Naive thymus-derived CD4-positive, alpha-beta T cell (primary cell): ENCODE measurements at regions of chr19 and their contacts with region 1.

Region 1: DNA sequence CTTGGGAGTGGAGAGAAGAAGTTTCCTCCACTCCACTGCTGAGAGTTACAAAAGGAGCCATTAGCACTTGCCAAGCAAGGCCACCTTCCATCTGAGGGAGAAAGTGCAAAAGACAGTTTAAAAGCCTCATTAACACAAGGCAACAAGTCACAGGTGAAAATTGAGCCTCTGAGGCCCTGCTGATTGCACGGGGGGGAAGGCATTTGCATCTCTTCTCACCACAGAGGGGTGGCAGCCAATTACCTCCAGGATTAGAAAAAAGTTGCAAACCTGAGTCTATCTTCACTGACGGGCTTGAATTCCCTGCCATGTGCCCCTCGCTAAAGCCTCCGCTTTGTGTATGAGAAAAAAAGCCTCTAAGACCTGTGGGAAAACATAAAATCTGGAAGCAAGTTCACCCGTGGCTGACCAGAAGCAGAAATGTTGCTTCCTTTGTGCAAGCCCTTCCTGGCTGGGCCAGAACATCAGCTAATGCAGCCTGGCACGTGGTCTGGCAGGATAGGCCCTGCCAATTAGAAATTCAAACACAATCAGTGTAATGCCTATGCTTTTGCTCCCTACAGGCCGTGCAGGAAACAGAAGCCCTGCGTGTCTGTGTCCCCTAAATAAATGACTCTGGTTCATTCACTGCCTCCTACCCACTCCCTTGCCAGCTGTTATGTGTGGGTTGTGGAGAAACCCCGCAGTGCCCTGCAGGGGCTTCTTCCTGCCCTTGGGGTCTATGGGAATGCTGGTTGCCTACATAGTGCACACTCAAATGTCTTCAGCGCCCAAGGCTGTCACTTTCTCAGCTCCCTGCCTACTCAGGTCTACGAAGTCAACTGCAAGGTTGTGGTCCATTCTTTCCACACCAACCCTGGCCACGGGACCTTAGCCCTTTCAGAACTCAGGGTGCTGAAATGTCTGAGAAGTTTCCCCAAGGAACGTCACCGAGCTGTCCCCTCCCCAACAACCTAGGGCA is 150.2 kb downstream of the UQCRFS1 start:
- DNase-seq: no peak
- ATAC-seq: no peak
- H3K4me3 ChIP-seq: no peak overlapping the region
- H3K4me3 Mint-ChIP-seq: no peak overlapping the region
- H3K27ac ChIP-seq: no peak overlapping the region
- H3K27ac Mint-ChIP-seq: no peak overlapping the region
- H3K4me1 ChIP-seq: no peaks in the 10 kb centered on the region
- H3K4me1 Mint-ChIP-seq: no peaks in the 10 kb centered on the region
- H3K27me3 ChIP-seq: no peaks in the 10 kb centered on the region
- H3K27me3 Mint-ChIP-seq: peaks cover 0 to 58% (median 15%) of the 10 kb centered on the region in 5 donors

Region 2: GRCh38 chr19:28847468-28847867 is 215.3 kb before region 1 on chr19:
- CTCF ChIA-PET with region 1: no interaction called
- POLR2A ChIA-PET with region 1: no interaction called
- intact Hi-C with region 1: no loop called
- DNase-seq: no peak
- ATAC-seq: no peak
- H3K4me3 ChIP-seq: no peak overlapping the region
- H3K4me3 Mint-ChIP-seq: no peak overlapping the region
- H3K27ac ChIP-seq: no peak overlapping the region
- H3K27ac Mint-ChIP-seq: no peak overlapping the region
- H3K4me1 ChIP-seq: no peaks in the 10 kb centered on the region
- H3K4me1 Mint-ChIP-seq: peaks cover 0 to 2% (median 0%) of the 10 kb centered on the region in 7 donors
- H3K27me3 ChIP-seq: no peaks in the 10 kb centered on the region
- H3K27me3 Mint-ChIP-seq: peaks cover 0 to 17% (median 14%) of the 10 kb centered on the region in 5 donors

Region 3: DNA sequence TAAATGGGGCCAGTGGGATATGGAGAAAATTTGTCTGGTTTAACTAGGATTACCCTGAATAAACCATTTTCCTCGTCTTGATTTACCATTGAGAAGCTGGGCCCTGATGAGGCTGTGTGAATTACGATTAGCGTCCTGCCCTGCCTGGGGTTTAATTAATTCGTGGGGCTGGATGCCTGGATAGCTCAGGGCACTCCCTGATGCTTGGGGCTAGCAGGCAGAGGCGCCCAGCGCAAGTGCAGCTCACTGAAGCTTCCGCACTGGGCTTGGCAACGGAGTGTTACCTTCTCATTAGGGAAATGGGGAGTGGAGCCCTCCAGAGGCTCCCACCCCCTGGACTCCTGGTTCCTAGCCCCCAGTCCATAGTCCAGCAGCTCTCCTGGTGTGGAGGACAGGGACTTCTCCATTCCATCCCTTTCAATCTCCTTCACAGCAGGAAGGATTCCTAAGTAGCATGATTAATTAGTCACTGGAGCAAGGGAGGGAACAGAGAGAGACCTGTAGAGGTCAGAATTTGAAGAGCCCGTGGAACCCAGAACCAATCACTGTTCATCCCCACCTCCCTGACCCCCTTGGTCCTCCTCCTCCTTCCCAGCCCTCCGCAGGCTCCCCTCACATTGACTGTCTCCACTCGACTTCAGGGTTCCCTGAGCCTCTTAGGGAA is 43.0 kb after region 1 on chr19:
- CTCF ChIA-PET with region 1: no interaction called
- POLR2A ChIA-PET with region 1: no interaction called
- intact Hi-C with region 1: loop called in 1 of 2 experiments (anchors 2 kb)
- DNase-seq: no peak
- ATAC-seq: no peak
- H3K4me3 ChIP-seq: no peak overlapping the region
- H3K4me3 Mint-ChIP-seq: no peak overlapping the region
- H3K27ac ChIP-seq: no peak overlapping the region
- H3K27ac Mint-ChIP-seq: no peak overlapping the region
- H3K4me1 ChIP-seq: no peaks in the 10 kb centered on the region
- H3K4me1 Mint-ChIP-seq: no peaks in the 10 kb centered on the region
- H3K27me3 ChIP-seq: no peaks in the 10 kb centered on the region
- H3K27me3 Mint-ChIP-seq: peaks cover 0 to 19% (median 8%) of the 10 kb centered on the region in 5 donors